B cell (primary cell): ENCODE measurements at regions of chr1 and their contacts with region 1.

Region 1: GRCh38 chr1:26820784-26821269 is 5.7 kb upstream of the ZDHHC18 start:
- DNase-seq: peak; percentile 91
- ATAC-seq: peak; percentile 100
- H3K4me3 ChIP-seq: peak overlapping the region in 1 of 5 experiments; percentile 8
- H3K4me3 Mint-ChIP-seq: peak overlapping the region; percentile 81
- H3K27ac ChIP-seq: peak overlapping the region in 1 of 2 donors; percentile 46
- H3K27ac Mint-ChIP-seq: peak overlapping the region; percentile 87
- H3K4me1 ChIP-seq: peaks cover 21 to 29% of the 10 kb centered on the region in 2 donors
- H3K4me1 Mint-ChIP-seq: peaks cover 21% of the 10 kb centered on the region
- H3K27me3 ChIP-seq: peaks cover 0 to 21% (median 5%) of the 10 kb centered on the region in 4 experiments
- H3K27me3 Mint-ChIP-seq: peaks cover 10% of the 10 kb centered on the region
- CTCF ChIP-seq: peak; percentile 73

Region 2: GRCh38 chr1:26529655-26530409 is 291.0 kb before region 1 on chr1 and contains the start of gene RPS6KA1:
- CTCF ChIA-PET with region 1: no interaction called
- POLR2A ChIA-PET with region 1: interaction called, 10 read pairs
- intact Hi-C with region 1: no loop called
- DNase-seq: peak; percentile 78
- ATAC-seq: peak; percentile 93
- H3K4me3 ChIP-seq: peak within 1 kb of the TSS; percentile 60 to 80 (median 68)
- H3K4me3 Mint-ChIP-seq: peak within 1 kb of the TSS; percentile 90
- H3K27ac ChIP-seq: peak within 1 kb of the TSS in 1 of 2 donors; percentile 49
- H3K27ac Mint-ChIP-seq: peak within 1 kb of the TSS; percentile 86
- H3K4me1 ChIP-seq: peaks cover 24 to 33% of the 10 kb centered on the region in 2 donors
- H3K4me1 Mint-ChIP-seq: peaks cover 35% of the 10 kb centered on the region
- H3K27me3 ChIP-seq: no peaks in the 10 kb centered on the region
- H3K27me3 Mint-ChIP-seq: peaks cover 1% of the 10 kb centered on the region
- CTCF ChIP-seq: no peak
- total RNA-seq, gene RPS6KA1: 99.9 and 109 TPM in 2 replicates

Region 3: DNA sequence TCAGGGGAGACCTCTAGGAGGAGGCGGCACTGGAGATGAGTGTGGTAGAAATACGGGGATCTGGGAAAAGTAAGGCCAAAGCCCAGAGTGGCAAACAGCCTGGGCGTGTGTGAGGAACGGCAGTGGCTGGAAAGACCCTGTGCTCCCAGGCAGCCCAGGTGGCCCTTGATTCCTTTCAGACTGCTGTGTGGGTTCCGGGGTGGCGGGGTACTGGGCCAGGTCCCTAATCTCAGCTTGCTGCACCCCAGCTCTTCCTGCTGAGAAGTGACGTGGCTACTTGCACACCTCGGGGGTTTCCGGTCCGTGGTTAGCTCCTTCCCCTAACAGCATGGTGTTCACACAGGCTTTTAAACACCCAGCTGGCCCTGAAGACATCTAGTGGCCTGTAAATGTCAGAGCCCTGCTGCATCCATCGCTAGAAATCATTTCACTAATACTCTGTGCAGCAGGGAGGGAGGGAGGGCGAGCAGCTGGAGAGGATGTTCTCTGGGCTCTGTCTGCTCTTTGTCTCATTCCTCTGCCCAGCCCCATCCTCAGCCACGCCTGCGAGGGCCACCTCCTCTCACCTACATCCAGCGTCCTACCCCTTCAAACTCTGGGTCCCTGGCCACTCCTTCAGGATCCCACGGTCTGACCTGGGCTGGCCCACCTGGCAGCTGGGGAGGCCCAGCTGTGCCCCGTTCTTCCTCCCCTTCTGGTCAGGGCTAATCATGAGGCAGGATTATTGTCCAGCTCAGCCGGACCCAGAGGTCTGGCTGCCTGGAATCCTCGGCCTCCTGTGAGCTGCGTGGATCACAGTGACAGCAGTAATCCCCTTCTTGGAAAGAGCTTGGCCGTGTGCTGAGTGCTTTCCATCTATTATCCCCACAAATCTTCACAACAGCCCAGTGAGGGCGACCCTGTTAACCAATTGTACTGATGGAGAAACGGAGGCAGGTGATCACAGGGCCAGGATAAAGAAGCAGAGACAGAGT is 12.9 kb after region 1 on chr1:
- CTCF ChIA-PET with region 1: interaction called, 153 read pairs
- POLR2A ChIA-PET with region 1: interaction called, 14 read pairs
- intact Hi-C with region 1: loop called (anchors 1 kb)
- DNase-seq: peak; percentile 95
- ATAC-seq: peak; percentile 96
- H3K4me3 ChIP-seq: peak overlapping the region in 4 of 5 experiments; percentile 3 to 54 (median 30)
- H3K4me3 Mint-ChIP-seq: peak overlapping the region; percentile 78
- H3K27ac ChIP-seq: peak overlapping the region; percentile 83 to 98
- H3K27ac Mint-ChIP-seq: peak overlapping the region; percentile 92
- H3K4me1 ChIP-seq: peaks cover 30 to 48% of the 10 kb centered on the region in 2 donors
- H3K4me1 Mint-ChIP-seq: peaks cover 56% of the 10 kb centered on the region
- H3K27me3 ChIP-seq: no peaks in the 10 kb centered on the region
- H3K27me3 Mint-ChIP-seq: no peaks in the 10 kb centered on the region
- CTCF ChIP-seq: peak; percentile 58

Region 4: DNA sequence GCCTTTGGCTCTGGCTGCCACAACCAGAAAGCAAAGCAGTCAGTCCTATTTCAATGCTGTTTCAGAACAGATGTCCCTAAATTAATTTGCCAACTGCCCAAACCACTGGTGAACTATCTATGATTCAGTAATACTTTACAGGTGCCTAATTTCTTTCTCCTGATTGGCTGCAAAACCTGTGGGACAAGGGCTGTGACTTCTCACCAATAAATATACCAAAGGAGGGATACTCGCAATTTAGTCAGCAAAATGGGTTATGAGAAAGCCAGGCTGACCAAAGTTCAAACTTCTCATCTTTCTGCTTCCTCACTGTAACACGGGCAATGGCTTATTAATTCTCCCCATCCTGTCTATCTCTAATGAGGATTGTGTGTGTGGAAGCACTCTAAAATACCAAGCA is 56.5 kb after region 1 on chr1:
- CTCF ChIA-PET with region 1: interaction called, 13 read pairs
- POLR2A ChIA-PET with region 1: interaction called, 3 read pairs
- intact Hi-C with region 1: loop called (anchors 2 kb)
- DNase-seq: no peak
- ATAC-seq: no peak
- H3K4me3 ChIP-seq: no peak overlapping the region
- H3K4me3 Mint-ChIP-seq: no peak overlapping the region
- H3K27ac ChIP-seq: no peak overlapping the region
- H3K27ac Mint-ChIP-seq: no peak overlapping the region
- H3K4me1 ChIP-seq: peaks cover 0 to 3% of the 10 kb centered on the region in 2 donors
- H3K4me1 Mint-ChIP-seq: peaks cover 3% of the 10 kb centered on the region
- H3K27me3 ChIP-seq: no peaks in the 10 kb centered on the region
- H3K27me3 Mint-ChIP-seq: no peaks in the 10 kb centered on the region
- CTCF ChIP-seq: no peak

Region 5: DNA sequence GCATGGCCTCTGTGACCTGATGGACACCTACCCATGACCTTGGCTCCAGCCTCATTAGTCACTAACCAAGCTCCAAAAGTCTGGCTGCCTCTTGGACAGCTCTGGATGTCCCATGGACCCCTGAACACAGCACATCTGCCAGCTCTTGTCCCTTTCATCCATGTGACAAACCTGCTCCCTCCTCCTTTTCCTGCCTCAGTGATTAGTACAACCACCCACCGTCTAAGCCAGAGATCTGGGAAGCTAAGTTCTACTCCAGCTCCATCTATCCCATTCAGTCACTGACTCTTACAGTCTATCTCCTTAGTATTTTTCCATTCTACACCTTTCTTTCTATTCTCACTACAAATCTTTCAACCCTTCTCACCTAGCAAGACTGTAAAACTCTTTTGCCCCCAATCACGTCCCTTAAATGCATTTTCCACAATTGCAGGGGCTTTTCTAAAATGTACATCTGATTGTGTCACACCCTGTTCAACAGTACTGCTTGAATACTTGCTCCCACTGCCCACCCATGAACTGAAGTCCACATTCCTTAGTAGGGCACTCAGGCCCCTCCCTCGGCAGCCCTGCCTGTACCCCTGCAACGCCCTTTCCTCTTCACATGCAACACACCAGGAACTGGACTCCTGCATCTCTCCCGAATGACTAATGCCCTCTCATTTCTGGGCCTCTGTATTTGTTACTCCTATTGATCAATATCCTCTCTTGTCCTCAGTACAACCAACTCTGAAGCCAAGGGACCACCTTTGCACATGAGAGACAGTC is 62.1 kb after region 1 on chr1:
- CTCF ChIA-PET with region 1: interaction called, 13 read pairs
- POLR2A ChIA-PET with region 1: no interaction called
- intact Hi-C with region 1: loop called (anchors 2 kb)
- DNase-seq: no peak
- ATAC-seq: no peak
- H3K4me3 ChIP-seq: no peak overlapping the region
- H3K4me3 Mint-ChIP-seq: no peak overlapping the region
- H3K27ac ChIP-seq: no peak overlapping the region
- H3K27ac Mint-ChIP-seq: no peak overlapping the region
- H3K4me1 ChIP-seq: peaks cover 0 to under 1% of the 10 kb centered on the region in 2 donors
- H3K4me1 Mint-ChIP-seq: peaks cover 8% of the 10 kb centered on the region
- H3K27me3 ChIP-seq: no peaks in the 10 kb centered on the region
- H3K27me3 Mint-ChIP-seq: no peaks in the 10 kb centered on the region
- CTCF ChIP-seq: no peak